ENCODE measurements at regions of chr15 and their contacts with region 1.

Region 1: DNA sequence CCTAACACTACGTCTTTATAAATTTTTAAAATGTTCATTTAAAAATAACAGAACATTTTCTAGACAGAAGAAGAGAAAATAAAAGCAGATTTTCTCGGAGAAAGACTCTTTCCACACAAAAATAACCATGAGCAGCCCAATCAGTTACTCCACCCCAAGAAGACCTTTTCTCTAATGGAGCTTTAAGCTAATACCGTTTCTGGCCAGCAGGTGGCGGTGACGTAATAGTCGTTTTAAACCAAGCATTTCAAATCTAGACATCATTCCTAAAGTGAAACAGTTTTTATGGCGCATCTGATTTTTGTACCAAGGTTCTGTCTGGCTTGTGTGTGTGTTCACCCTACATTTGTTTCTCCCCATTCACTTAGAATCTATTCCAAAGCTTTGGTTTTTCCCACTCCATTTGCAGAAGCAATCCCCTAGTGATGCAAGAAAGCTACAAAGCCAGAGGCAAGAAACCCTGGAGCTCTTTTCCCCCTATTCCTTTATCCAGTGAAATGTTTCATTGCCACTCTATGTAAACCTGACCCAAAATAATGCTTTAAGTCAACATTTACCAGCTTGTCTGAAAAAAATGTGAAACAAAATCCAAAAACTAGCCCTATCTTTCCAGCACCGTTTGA is 336.7 kb upstream of the IGF1R start:
- DNase-seq: peak; percentile 81
- ATAC-seq: peak; percentile 41; the same call in 1 of the 2 replicates
- H3K4me3 Mint-ChIP-seq: no peak overlapping the region
- H3K27ac Mint-ChIP-seq: no peak overlapping the region
- H3K4me1 Mint-ChIP-seq: no peaks in the 10 kb centered on the region
- H3K27me3 Mint-ChIP-seq: peaks cover 3% of the 10 kb centered on the region; the same call in 1 of the 2 replicates
- CTCF ChIP-seq: peak; percentile 89

Region 2: DNA sequence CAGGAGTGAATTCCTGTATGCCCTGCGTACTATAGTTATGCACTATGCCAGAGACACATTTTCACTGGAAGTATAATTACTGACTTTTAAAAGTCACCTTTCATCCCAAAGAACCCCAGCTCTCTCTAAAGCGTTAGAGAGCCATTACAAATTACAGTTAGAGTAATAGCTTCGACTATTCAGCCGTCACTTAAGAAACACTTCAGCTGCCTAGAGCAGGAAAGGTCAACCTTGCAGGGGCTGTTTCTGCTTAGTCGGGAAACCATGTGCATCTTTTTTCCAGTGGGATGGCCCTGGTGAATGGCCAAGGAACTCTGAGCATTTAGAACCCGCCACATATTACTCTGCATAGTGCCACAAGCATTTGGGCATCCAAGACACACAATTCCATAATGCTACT is 115.3 kb before region 1 on chr15:
- CTCF ChIA-PET with region 1: no interaction called
- POLR2A ChIA-PET with region 1: no interaction called
- DNase-seq: no peak
- ATAC-seq: no peak
- H3K4me3 Mint-ChIP-seq: no peak overlapping the region
- H3K27ac Mint-ChIP-seq: no peak overlapping the region
- H3K4me1 Mint-ChIP-seq: peaks cover 6% of the 10 kb centered on the region
- H3K27me3 Mint-ChIP-seq: no peaks in the 10 kb centered on the region
- CTCF ChIP-seq: no peak

Region 3: GRCh38 chr15:98292442-98293240 is 19.0 kb before region 1 on chr15:
- CTCF ChIA-PET with region 1: interaction called, 12 read pairs
- POLR2A ChIA-PET with region 1: no interaction called
- DNase-seq: peak; percentile 92
- ATAC-seq: peak; percentile 95
- H3K4me3 Mint-ChIP-seq: peak overlapping the region; percentile 79
- H3K27ac Mint-ChIP-seq: no peak overlapping the region
- H3K4me1 Mint-ChIP-seq: peaks cover 15% of the 10 kb centered on the region
- H3K27me3 Mint-ChIP-seq: peaks cover 17% of the 10 kb centered on the region
- CTCF ChIP-seq: peak; percentile 90

Region 4: DNA sequence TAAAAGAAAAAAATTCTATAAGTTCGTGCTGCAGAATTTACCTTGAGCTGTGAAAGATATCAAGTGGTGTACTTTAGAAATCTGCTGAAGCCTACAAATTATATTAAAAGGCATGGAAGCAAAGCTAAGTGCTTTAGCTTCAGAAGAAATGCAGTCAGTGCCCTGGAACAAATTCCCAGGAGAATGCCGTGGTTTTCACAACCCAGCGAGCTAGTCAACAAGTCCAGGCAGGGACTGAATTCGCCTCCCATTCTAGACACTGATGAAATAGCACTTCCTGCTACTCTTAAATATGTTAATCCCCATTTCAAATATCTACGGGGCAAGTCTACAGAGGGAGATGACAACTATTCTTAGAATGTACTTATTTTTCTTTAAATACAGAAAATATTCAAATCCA is 10.2 kb after region 1 on chr15:
- CTCF ChIA-PET with region 1: interaction called, 26 read pairs
- POLR2A ChIA-PET with region 1: no interaction called
- DNase-seq: no peak
- ATAC-seq: no peak
- H3K4me3 Mint-ChIP-seq: no peak overlapping the region
- H3K27ac Mint-ChIP-seq: no peak overlapping the region
- H3K4me1 Mint-ChIP-seq: peaks cover 8% of the 10 kb centered on the region; the same call in 1 of the 2 replicates
- H3K27me3 Mint-ChIP-seq: no peaks in the 10 kb centered on the region; the same call in 1 of the 2 replicates
- CTCF ChIP-seq: no peak

Region 5: GRCh38 chr15:98382139-98382538 is 70.5 kb after region 1 on chr15:
- CTCF ChIA-PET with region 1: interaction called, 54 read pairs
- POLR2A ChIA-PET with region 1: no interaction called
- DNase-seq: peak; percentile 38
- ATAC-seq: peak; percentile 98
- H3K4me3 Mint-ChIP-seq: no peak overlapping the region
- H3K27ac Mint-ChIP-seq: no peak overlapping the region
- H3K4me1 Mint-ChIP-seq: peaks cover 14% of the 10 kb centered on the region
- H3K27me3 Mint-ChIP-seq: peaks cover 8% of the 10 kb centered on the region
- CTCF ChIP-seq: no peak; the same call in 1 of the 2 replicates

Region 6: DNA sequence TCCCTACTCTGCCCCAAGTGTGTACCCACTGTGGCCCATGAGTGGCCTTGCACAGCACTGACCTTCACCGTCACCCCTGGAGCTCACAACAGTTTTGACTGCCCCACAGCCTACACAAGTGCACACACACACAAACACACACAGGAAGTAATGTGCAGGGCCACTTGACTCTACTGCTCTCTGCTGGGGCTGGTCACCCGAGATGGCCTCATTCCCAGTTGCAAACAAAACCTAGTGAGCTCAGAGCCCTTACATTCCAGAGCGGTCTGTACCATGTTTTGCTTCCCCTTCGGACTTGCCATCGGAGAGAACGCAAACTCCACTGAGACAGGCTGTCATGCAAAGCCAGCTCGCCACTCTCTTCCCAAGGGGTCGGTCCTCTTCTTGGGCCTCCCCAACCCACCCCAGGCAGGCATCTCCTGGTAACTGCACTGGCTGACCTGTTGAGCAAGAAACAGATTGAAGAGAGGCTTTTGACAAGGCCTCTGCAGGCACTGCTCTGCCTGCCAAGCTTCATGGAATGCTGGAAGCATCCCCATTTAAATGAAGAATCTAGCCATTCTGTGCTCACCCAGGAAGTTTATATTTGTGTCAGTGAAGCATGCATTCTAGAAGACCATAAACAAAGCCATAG is 104.7 kb after region 1 on chr15:
- CTCF ChIA-PET with region 1: interaction called, 93 read pairs
- POLR2A ChIA-PET with region 1: no interaction called
- DNase-seq: no peak
- ATAC-seq: no peak
- H3K4me3 Mint-ChIP-seq: no peak overlapping the region
- H3K27ac Mint-ChIP-seq: 0 out of 2 replicates have a peak overlapping the region, but pooled peaks have one; percentile 42
- H3K4me1 Mint-ChIP-seq: peaks cover 14% of the 10 kb centered on the region
- H3K27me3 Mint-ChIP-seq: peaks cover 13% of the 10 kb centered on the region
- CTCF ChIP-seq: no peak

Region 7: GRCh38 chr15:98421419-98422129 is 109.9 kb after region 1 on chr15:
- CTCF ChIA-PET with region 1: interaction called, 93 read pairs
- POLR2A ChIA-PET with region 1: no interaction called
- DNase-seq: peak; percentile 89
- ATAC-seq: peak; percentile 78
- H3K4me3 Mint-ChIP-seq: peak overlapping the region; percentile 60
- H3K27ac Mint-ChIP-seq: no peak overlapping the region
- H3K4me1 Mint-ChIP-seq: peaks cover 11% of the 10 kb centered on the region
- H3K27me3 Mint-ChIP-seq: peaks cover 45% of the 10 kb centered on the region
- CTCF ChIP-seq: peak; percentile 99

Region 8: GRCh38 chr15:98428253-98428989 is 116.7 kb after region 1 on chr15:
- CTCF ChIA-PET with region 1: interaction called, 39 read pairs
- POLR2A ChIA-PET with region 1: no interaction called
- DNase-seq: peak; percentile 85
- ATAC-seq: peak; percentile 87
- H3K4me3 Mint-ChIP-seq: peak overlapping the region; percentile 58
- H3K27ac Mint-ChIP-seq: no peak overlapping the region
- H3K4me1 Mint-ChIP-seq: no peaks in the 10 kb centered on the region
- H3K27me3 Mint-ChIP-seq: peaks cover 57% of the 10 kb centered on the region
- CTCF ChIP-seq: peak; percentile 82

Measured in WTC11 (cell line).